PC-3 (cell line): ENCODE measurements at regions of chr2 and their contacts with region 1.

Region 1: GRCh38 chr2:43226558-43226954 is at the start of gene ZFP36L2:
- DNase-seq: peak; percentile 98
- ATAC-seq: peak; percentile 54
- H3K4me3 ChIP-seq: peak within 1 kb of the TSS; percentile 88
- H3K27ac ChIP-seq: peak within 1 kb of the TSS; percentile 98
- H3K4me1 ChIP-seq: peaks cover 32% of the 10 kb centered on the region
- H3K27me3 ChIP-seq: no peaks in the 10 kb centered on the region
- CTCF ChIP-seq: no peak
- total RNA-seq, gene ZFP36L2: 14.8 and 26.0 TPM in 2 replicates

Region 2: GRCh38 chr2:42199626-42200025 is 1026.9 kb before region 1 on chr2:
- CTCF ChIA-PET with region 1: no interaction called
- POLR2A ChIA-PET with region 1: no interaction called
- intact Hi-C with region 1: no loop called
- DNase-seq: no peak
- ATAC-seq: no peak
- H3K4me3 ChIP-seq: no peak overlapping the region
- H3K27ac ChIP-seq: no peak overlapping the region
- H3K4me1 ChIP-seq: peaks cover 19% of the 10 kb centered on the region
- H3K27me3 ChIP-seq: no peaks in the 10 kb centered on the region
- CTCF ChIP-seq: no peak

Region 3: GRCh38 chr2:42859006-42859552 is 367.5 kb before region 1 on chr2:
- CTCF ChIA-PET with region 1: no interaction called
- POLR2A ChIA-PET with region 1: no interaction called
- intact Hi-C with region 1: loop called (anchors 1 kb)
- DNase-seq: peak; percentile 90
- ATAC-seq: peak; percentile 45; the same call in 1 of the 2 replicates
- H3K4me3 ChIP-seq: no peak overlapping the region
- H3K27ac ChIP-seq: no peak overlapping the region
- H3K4me1 ChIP-seq: no peaks in the 10 kb centered on the region
- H3K27me3 ChIP-seq: no peaks in the 10 kb centered on the region
- CTCF ChIP-seq: peak; percentile 97

Region 4: DNA sequence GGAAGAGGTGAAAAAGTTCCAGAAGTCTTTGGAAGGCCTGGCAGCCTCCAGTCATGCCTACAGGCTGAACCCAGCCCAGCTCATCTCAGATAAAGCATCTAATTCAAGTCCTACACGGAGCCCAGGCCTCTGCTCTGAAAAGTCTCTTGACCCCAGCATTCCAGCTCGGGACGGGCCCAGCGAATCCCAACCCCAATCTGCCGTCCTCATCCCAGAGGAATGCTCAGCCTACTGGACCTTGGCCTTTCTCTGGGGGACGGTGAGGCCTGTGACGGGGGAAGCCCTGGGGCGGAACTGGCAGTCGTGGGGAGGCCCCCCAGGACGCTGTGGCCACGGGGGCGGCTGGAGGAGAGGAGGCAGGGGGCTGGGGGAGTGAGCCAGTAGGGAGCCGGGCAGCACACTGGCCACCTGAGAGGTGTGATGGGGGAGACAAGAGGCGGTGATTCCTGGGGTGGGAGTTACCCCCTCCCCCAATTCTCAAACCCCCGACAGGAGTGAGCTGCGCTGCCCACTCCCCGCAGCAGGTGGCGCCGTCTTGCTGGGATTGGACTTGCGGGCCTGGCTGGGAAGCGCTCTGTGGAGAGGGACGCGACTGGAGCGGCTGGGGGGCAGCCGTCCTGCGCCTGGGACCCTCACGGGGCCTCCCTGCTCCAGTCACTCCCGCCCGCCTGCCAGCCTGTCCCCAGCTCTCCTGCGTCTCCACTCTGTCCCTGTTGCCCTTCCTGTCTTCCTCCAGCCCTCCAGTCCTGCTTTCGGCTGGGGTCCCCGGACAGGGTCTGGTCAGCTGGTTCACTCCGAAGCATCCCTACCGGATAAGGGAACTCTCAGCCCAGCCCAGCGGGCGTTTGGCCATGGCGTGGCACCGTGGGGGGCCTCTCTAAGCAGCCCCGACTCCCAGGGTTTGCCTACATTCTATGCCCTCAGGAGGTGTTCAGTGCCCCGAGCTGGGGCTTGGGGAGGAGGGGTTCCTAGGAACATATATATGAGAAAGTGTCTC is 251.5 kb before region 1 on chr2:
- CTCF ChIA-PET with region 1: interaction called, 11 read pairs
- POLR2A ChIA-PET with region 1: no interaction called
- intact Hi-C with region 1: loop called (anchors 1 kb)
- DNase-seq: peak; percentile 66
- ATAC-seq: peak; percentile 88
- H3K4me3 ChIP-seq: peak overlapping the region; percentile 69
- H3K27ac ChIP-seq: peak overlapping the region; percentile 32; the same call in 1 of the 2 replicates
- H3K4me1 ChIP-seq: peaks cover 19% of the 10 kb centered on the region
- H3K27me3 ChIP-seq: no peaks in the 10 kb centered on the region
- CTCF ChIP-seq: peak; percentile 88

Region 5: DNA sequence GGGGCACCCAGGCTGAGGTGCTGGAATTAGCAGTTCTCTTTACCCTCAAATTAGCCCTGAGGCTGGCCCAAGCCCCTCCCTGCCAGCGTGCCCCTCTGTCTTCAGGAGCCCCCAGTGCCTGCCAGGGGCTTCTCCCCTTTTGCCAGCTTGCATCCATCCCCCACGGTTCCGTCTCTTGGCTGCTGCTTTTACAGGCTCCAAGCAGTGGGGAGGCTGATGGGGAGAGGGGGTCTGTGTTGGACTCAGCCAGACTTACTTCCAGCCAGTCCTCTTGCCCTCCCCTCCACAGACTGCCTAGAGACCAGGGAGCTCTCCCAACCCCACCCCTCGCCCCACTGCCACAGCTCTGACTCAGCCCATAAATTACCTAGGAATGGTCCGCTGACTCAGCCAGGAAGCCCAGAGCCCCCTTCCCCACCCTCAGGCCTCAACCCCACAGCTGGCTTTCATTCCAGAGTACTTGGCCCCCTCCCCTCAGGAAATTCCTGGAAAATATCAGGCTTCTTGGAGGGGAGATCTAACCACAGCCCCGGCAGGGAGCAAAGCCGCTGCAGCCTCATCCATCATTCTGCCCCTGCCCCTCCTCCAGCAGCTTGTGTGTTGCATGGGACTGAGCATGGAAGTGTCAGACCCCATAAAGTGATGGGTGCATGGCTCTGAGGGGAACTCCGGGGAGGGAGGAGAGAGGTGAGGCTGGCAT is 184.7 kb before region 1 on chr2:
- CTCF ChIA-PET with region 1: no interaction called
- POLR2A ChIA-PET with region 1: no interaction called
- intact Hi-C with region 1: loop called (anchors 5 kb)
- DNase-seq: peak; percentile 99
- ATAC-seq: peak; percentile 94
- H3K4me3 ChIP-seq: peak overlapping the region; percentile 40; the same call in 1 of the 2 replicates
- H3K27ac ChIP-seq: peak overlapping the region; percentile 98
- H3K4me1 ChIP-seq: peaks cover 50% of the 10 kb centered on the region
- H3K27me3 ChIP-seq: no peaks in the 10 kb centered on the region
- CTCF ChIP-seq: no peak

Region 6: DNA sequence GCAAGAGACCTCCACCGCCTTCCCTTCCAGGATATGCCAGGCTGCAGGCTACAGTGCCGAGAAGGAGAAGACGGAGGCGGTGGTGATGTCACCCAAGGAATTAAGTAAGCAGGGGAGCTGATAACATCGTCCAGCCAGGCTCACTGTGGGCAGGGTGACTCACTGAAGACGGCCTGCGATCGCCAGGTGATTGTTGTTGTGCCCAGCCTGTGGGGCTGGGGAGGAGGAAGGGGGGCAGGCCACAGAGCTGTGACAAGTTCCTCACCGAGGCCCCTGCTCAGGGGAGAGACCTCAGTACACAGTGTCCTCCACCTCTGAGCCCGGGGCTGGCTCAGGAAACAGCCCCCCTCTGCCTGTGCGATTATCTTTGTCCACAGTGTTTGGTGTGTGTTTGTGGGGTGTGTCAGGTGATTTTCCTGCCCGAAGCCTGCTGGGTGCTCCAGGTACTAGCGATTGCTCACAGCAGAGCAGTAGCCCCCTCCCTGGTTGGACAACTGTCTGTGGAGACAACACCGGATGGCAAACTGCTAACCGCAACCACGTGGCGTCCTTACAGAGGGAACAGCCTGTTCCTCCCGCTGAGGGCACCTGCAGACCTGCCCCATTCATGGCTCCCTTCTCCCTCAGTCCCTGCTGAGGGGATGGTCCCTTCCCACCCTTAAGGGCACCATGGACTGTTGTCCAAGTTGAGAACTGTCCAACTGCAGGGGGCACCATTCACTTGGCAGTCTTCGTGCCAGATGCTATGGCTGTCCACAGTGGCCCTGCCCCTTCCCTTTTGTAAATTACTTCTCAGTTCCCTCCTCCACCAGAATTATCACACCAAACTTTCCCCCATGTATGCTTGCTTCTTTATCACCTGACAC is 95.3 kb before region 1 on chr2:
- CTCF ChIA-PET with region 1: interaction called, 5 read pairs
- POLR2A ChIA-PET with region 1: no interaction called
- intact Hi-C with region 1: loop called (anchors 1 kb)
- DNase-seq: peak; percentile 94
- ATAC-seq: peak; percentile 83
- H3K4me3 ChIP-seq: peak overlapping the region; percentile 28; the same call in 1 of the 2 replicates
- H3K27ac ChIP-seq: peak overlapping the region; percentile 83
- H3K4me1 ChIP-seq: peaks cover 23% of the 10 kb centered on the region
- H3K27me3 ChIP-seq: no peaks in the 10 kb centered on the region
- CTCF ChIP-seq: peak; percentile 66

Region 7: DNA sequence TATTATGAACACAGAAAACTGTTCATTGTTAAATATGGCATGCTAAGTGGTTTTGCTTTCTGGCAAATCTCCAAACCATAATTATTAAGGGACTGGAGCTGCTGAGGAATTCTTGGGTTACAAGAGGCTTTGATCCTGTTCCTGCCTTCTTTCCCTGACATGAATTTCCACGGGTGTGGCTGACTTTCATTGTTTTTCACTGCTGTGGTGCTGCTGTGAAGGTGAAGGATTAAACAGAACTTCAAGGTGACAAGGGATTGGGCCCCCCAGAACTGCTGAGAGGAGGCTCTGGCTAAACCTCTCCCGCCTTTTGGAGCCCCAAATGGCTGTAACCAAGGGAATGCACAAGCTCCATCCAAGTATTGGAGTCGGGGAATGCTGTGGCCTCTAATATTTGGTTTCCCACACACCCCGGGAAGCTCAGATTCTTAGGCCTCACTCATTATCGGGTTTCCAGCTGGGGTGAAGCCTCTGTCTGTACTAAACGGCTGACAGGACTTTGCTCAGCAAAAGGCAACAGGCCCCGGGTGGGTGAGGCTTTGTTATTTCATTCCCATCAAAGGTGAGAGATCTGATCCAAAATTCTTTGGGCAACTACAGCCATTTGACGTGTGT is 28.8 kb after region 1 on chr2:
- CTCF ChIA-PET with region 1: no interaction called
- POLR2A ChIA-PET with region 1: no interaction called
- intact Hi-C with region 1: no loop called
- DNase-seq: peak; percentile 6
- ATAC-seq: no peak
- H3K4me3 ChIP-seq: no peak overlapping the region
- H3K27ac ChIP-seq: no peak overlapping the region
- H3K4me1 ChIP-seq: no peaks in the 10 kb centered on the region
- H3K27me3 ChIP-seq: no peaks in the 10 kb centered on the region
- CTCF ChIP-seq: no peak

Region 8: DNA sequence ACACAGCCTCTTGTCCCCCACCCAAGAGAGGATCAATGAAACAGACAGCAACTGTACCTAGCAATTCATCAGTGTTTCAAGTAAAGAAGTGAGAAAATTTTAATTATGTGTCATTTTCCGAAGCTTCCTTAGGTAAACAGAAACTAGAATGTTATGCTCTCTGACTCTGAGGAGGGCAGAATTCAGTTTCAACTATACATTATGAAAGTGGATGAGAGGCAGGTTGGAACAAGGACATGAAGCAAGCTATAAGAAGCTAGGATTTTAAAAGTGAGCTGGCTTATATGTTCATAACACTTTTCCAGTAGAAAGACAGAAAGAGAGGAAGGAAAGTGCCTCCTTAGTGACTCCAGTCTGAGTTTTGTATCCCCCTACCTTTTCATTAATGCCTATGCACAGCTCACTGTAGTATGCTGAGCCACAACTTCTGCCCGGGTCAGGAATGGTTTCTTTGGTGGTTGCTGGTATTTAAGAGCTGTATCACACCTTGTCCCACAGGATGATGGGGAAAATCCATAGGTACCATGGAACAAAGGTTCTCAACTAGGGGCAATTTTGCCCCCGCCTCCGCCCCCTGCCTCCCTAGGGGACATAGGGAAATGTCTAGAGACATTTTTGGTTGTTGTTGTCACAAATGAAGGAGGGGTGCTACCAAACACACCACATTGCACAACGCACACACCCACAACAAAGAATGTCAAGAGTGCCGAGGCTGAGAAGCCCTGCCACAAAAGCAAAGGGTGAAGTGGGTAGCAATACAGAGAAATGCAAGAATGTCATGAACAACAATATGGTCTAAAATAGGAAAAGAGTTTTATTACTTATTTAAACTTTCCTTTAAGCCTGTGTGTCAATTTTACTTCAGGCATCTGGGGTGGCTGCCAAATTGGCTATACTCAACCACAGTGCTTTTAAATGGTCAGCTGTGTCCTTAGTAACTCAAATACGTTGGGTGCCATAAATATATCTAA is 160.8 kb after region 1 on chr2:
- CTCF ChIA-PET with region 1: no interaction called
- POLR2A ChIA-PET with region 1: no interaction called
- intact Hi-C with region 1: no loop called
- DNase-seq: peak; percentile 33
- ATAC-seq: peak; percentile 61
- H3K4me3 ChIP-seq: no peak overlapping the region
- H3K27ac ChIP-seq: no peak overlapping the region
- H3K4me1 ChIP-seq: peaks cover 26% of the 10 kb centered on the region
- H3K27me3 ChIP-seq: no peaks in the 10 kb centered on the region
- CTCF ChIP-seq: no peak

Region 9: DNA sequence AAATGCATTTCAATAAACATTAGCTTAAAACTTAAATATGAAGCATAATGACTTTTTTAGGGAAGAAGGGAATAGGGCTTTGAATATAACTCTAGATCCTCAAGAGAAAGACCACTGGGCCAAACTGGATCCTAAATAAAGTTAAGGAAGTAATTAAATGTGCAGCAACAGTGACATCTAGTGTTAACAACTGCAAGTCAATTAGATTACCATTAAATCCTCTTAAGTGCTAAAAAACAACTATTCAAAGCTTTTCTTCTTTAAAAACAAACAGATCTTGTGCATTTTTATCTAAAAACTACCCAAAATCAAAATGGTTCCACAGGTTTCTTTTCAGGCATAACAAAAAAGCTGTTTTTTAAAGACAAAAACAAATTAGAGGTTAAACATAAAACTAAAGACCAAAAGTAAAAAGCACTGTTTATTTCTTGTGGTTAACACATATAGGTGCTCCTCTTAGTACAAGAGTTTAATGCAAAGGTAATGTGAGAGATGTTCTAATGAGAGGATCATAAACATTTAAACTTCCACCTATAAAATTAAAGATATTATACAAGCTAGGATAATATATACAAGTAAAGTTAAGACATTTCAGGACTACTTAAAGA is 257.9 kb after region 1 on chr2:
- CTCF ChIA-PET with region 1: interaction called, 6 read pairs
- POLR2A ChIA-PET with region 1: interaction called, 4 read pairs
- intact Hi-C with region 1: loop called (anchors 1 kb)
- DNase-seq: peak; percentile 79
- ATAC-seq: no peak
- H3K4me3 ChIP-seq: no peak overlapping the region
- H3K27ac ChIP-seq: no peak overlapping the region
- H3K4me1 ChIP-seq: peaks cover 27% of the 10 kb centered on the region
- H3K27me3 ChIP-seq: no peaks in the 10 kb centered on the region
- CTCF ChIP-seq: peak; percentile 82